Mammary epithelial cell (primary cell): ENCODE measurements at regions of chr4 and their contacts with region 1.

Region 1: DNA sequence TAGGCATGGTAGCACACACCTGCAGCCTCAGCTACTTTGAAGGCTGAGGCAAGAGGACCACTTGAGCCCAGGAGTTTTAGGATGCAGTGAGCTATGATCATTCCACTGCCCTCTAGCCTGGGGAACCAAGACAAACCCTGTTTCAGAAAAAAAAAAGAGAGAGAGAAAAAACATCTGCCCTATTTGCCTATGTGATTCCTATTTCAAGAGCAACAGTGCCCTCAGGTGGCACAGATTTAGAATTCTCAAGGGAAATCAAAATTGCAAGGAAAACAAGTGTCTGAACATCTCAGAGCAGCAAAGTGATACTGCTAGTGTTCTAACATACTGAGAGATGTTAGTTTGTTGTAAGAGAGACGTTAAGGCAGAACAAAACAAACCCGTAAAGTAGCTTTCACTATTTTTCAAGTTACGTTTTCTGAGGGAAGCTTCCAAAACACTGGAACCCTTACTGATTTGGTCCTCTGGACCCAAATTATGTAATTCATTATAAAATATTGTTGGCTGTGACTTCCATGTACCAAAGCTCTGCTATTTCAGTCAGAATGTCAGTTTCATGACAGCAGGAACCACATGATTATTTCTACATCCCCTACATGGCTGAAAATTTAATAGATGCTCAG is 7.9 kb downstream of the BDH2 start:
- DNase-seq: peak; percentile 63
- H3K4me3 ChIP-seq: no peak overlapping the region
- H3K27ac ChIP-seq: no peak overlapping the region
- H3K4me1 ChIP-seq: peaks cover 4% of the 10 kb centered on the region
- H3K27me3 ChIP-seq: no peaks in the 10 kb centered on the region
- CTCF ChIP-seq: peak; percentile 52 to 66

Region 2: GRCh38 chr4:102268355-102268754 is 823.4 kb before region 1 on chr4:
- CTCF ChIA-PET with region 1: no interaction called
- dilution Hi-C with region 1: no loop called
- in situ Hi-C with region 1: no loop called
- intact Hi-C with region 1: no loop called
- DNase-seq: no peak
- H3K4me3 ChIP-seq: no peak overlapping the region
- H3K27ac ChIP-seq: no peak overlapping the region
- H3K4me1 ChIP-seq: no peaks in the 10 kb centered on the region
- H3K27me3 ChIP-seq: no peaks in the 10 kb centered on the region
- CTCF ChIP-seq: no peak

Region 3: DNA sequence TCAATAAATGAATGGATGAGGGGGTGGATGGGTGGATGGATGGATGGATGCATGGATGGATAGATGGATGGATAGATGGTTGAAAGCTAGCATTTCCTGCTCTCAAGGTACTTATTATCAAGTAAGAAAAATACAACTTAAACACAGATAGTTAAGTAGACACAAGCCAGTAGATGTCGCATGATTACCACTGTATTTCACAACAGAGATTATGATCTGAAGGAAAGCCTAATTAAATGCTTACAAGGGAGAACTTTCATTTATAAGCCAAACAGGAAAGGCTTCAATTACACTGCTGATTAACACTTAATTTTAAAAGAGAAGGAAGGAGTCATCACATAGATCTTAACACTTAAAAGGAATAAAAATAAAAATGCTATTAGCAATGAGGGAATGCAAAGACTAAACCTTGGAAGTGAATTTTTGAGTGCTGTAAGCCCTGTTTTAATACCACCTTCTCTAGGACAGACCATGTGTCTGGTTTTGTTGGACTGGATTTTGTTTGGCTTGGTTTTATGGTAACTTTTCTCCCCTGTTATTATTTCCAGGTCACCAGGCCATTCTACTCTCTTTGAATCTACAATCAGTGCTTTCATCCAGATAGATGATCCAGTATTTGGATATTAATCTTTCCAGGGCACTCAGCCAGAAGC is 671.0 kb before region 1 on chr4:
- CTCF ChIA-PET with region 1: no interaction called
- dilution Hi-C with region 1: no loop called
- in situ Hi-C with region 1: no loop called
- intact Hi-C with region 1: loop called (anchors 1 kb)
- DNase-seq: peak; percentile 39
- H3K4me3 ChIP-seq: no peak overlapping the region
- H3K27ac ChIP-seq: no peak overlapping the region
- H3K4me1 ChIP-seq: peaks cover 7% of the 10 kb centered on the region
- H3K27me3 ChIP-seq: no peaks in the 10 kb centered on the region
- CTCF ChIP-seq: peak; percentile 27 to 42

Region 4: GRCh38 chr4:102449751-102450352 is 641.9 kb before region 1 on chr4:
- CTCF ChIA-PET with region 1: no interaction called
- dilution Hi-C with region 1: no loop called
- in situ Hi-C with region 1: loop called (anchors 10 kb)
- intact Hi-C with region 1: loop called (anchors 1 kb)
- DNase-seq: peak; percentile 51
- H3K4me3 ChIP-seq: no peak overlapping the region
- H3K27ac ChIP-seq: no peak overlapping the region
- H3K4me1 ChIP-seq: no peaks in the 10 kb centered on the region
- H3K27me3 ChIP-seq: no peaks in the 10 kb centered on the region
- CTCF ChIP-seq: peak; percentile 48 to 75

Region 5: GRCh38 chr4:102935716-102936115 is 156.0 kb before region 1 on chr4:
- CTCF ChIA-PET with region 1: no interaction called
- dilution Hi-C with region 1: no loop called
- in situ Hi-C with region 1: no loop called
- intact Hi-C with region 1: no loop called
- DNase-seq: no peak
- H3K4me3 ChIP-seq: no peak overlapping the region
- H3K27ac ChIP-seq: no peak overlapping the region
- H3K4me1 ChIP-seq: no peaks in the 10 kb centered on the region
- H3K27me3 ChIP-seq: peaks cover 2% of the 10 kb centered on the region
- CTCF ChIP-seq: no peak

Region 6: DNA sequence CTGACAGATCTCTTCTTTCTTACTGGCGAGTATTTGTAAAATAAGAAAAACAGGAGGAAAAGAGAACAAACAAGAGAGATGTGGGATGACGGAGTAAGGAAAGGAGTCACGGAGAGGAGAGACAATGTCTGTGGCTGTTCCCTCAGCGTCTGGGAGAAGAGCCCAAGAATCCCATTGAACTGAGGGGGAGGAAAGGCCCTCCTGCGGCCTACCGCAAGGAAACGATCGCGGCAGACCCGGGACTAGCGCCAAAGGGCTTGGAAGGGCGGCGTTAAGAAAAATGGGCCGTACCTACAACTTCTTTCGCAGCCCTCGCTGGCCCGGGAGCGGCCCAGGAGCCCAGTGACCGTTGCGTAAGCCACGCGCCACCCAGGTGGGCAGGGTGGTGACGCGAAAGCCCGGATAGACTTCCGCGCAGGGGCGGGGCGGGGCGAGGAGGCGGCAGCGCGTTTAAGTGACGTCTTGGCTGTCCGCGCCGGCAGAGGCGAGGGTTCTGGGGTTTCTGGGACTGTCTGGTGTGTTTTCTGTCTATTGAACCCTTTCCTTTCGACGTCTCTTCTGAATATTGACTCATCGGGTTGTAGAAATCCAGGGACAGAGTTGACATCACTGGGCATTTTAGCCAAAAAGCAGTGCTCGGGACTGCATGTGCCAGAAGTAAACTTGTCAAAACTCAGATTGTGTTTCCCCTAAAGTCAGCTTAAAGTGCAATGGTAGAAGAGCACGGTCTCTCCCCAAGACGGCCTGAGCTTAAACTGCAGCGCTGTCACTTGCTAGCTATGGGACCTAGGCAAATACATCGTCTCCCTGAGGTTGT is 72.2 kb before region 1 on chr4 and contains the start of gene SLC9B1:
- CTCF ChIA-PET with region 1: no interaction called
- dilution Hi-C with region 1: loop called (anchors 5 kb)
- in situ Hi-C with region 1: no loop called
- intact Hi-C with region 1: no loop called
- DNase-seq: peak; percentile 98
- H3K4me3 ChIP-seq: peak within 1 kb of the TSS; percentile 54 to 60 (median 57)
- H3K27ac ChIP-seq: peak within 1 kb of the TSS; percentile 94
- H3K4me1 ChIP-seq: peaks cover 15% of the 10 kb centered on the region
- H3K27me3 ChIP-seq: no peaks in the 10 kb centered on the region
- CTCF ChIP-seq: no peak
- total RNA-seq, gene SLC9B1: 0.17 TPM in 1 of 2 donors, not detected in the other

Region 7: DNA sequence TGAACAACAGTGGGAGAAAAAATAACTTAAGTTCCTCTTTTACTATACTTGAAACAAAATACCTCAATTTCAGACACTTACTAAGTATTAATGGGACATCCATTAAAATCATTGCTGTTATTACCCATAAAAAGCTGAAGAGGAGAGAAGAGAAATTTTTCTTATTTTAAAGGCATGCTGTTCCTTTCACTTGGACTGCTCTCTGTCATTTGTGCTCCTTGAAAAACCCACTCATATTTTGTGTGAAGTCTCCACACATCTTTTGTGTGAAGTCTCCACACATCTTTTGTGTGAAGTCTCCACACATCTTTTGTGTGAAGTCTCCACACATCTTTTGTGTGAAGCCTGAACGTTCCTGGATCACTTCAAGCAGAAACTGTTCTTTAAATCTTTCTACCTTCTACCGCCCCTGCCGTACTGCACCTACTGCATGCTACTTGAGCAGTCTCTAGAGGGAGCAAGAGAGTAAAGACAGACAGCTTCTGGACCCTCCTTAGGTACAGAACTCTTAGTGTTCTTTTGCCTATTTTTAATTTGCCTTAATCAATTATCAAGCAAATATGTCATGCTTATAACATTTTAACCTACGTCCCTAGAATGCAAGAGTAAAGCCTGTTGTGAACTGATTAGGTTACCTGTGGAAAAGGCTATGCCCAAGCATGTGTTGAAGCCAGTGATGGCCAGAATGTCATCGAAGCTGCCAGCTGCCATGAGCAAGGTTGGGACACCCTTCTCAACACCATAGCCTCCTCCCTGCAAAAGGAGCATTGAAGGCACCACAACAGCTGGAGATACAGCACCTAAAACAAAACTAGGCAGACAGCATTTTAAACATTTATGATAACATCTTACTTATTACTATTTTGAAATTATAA is 45.1 kb before region 1 on chr4:
- CTCF ChIA-PET with region 1: interaction called, 5 read pairs
- dilution Hi-C with region 1: no loop called
- in situ Hi-C with region 1: no loop called
- intact Hi-C with region 1: loop called (anchors 1 kb)
- DNase-seq: peak; percentile 10
- H3K4me3 ChIP-seq: no peak overlapping the region
- H3K27ac ChIP-seq: no peak overlapping the region
- H3K4me1 ChIP-seq: no peaks in the 10 kb centered on the region
- H3K27me3 ChIP-seq: no peaks in the 10 kb centered on the region
- CTCF ChIP-seq: peak; percentile 76 to 84